ENCODE measurements at regions of chr13 and their contacts with region 1.

Region 1: GRCh38 chr13:40666045-40666904 is at the start of gene FOXO1:
- DNase-seq: peak; percentile 87 to 89
- H3K4me3 ChIP-seq: peak within 1 kb of the TSS; percentile 78 to 98 (median 97)
- H3K27ac ChIP-seq: peak within 1 kb of the TSS; percentile 94 to 99 (median 98)
- H3K4me1 ChIP-seq: peaks cover 15 to 26% of the 10 kb centered on the region in 2 donors
- H3K27me3 ChIP-seq: no peaks in the 10 kb centered on the region
- CTCF ChIP-seq: no peak
- POLR2A ChIP-seq: peak; percentile 92 to 99
- total RNA-seq, gene FOXO1: 65.2 to 92.9 (median 70.0) TPM

Region 2: GRCh38 chr13:40564342-40565001 is 101.8 kb before region 1 on chr13:
- intact Hi-C with region 1: loop called (anchors 10 kb)
- DNase-seq: peak in 1 of 2 donors; percentile 31
- H3K4me3 ChIP-seq: no peak overlapping the region
- H3K27ac ChIP-seq: peak overlapping the region; percentile 37 to 79 (median 68)
- H3K4me1 ChIP-seq: peaks cover 80 to 84% of the 10 kb centered on the region in 2 donors
- H3K27me3 ChIP-seq: no peaks in the 10 kb centered on the region
- CTCF ChIP-seq: peak in 2 of 6 experiments; percentile 15 to 38
- POLR2A ChIP-seq: peak in 1 of 2 donors; percentile 13

Region 3: DNA sequence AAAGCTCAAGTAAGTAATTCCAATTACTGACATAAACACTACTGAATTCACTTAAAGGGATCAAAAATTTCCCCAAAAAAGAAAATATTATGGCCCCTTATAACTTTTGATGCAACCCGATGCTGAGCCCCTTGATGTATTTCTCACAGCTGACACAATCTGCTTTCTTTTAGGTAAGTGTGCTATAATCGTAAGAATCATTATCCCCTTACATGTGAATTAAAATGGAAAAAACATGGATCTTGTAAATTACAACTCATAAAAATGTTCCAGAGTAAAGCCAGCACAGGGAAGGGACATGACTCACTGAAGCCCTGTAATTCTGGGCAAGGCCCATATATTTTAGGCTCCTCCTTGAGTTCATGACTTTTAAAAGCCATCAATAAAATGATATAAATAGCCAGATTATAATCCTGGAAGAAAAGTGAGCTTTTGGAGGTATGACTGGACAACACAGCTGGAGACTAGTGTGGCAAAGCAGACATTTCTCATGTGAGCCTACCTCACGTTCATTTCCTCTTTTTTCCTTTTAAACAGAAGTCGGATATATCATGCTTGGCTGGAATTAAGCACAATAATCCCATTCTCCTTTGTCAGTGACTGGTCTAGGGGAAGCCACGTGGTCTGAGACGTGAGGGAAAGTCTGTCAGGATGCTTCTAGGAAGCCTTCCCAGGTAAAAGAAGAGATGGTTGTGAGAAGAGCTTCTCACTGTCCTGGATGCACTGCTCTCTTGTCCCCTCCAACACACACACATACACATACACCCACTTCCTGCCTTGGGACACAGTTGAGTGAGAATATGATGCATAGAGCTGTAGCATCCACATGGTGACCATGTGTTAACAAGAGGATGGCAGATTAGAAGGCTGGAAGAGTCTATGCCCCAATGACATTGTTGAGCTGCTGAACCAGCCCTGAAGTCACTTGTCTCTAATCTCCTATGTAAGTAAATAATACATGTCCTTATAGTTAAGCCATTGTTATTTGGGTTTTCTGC is 956.5 kb after region 1 on chr13:
- intact Hi-C with region 1: no loop called
- DNase-seq: no peak
- H3K4me3 ChIP-seq: no peak overlapping the region
- H3K27ac ChIP-seq: no peak overlapping the region
- H3K4me1 ChIP-seq: no peaks in the 10 kb centered on the region
- H3K27me3 ChIP-seq: no peaks in the 10 kb centered on the region
- CTCF ChIP-seq: no peak
- POLR2A ChIP-seq: no peak

Measured in thyroid gland (tissue), 4 donors.